GM12878 (cell line): ENCODE measurements at regions of chr11 and their contacts with region 1.

Region 1: GRCh38 chr11:34208266-34209135 is 103.1 kb downstream of the NAT10 start:
- DNase-seq: no peak
- ATAC-seq: 0 out of 3 replicates have a peak, but pooled peaks have one; percentile 23
- H3K4me3 ChIP-seq: no peak overlapping the region
- H3K27ac ChIP-seq: no peak overlapping the region
- H3K4me1 ChIP-seq: peaks cover 7% of the 10 kb centered on the region
- H3K27me3 ChIP-seq: no peaks in the 10 kb centered on the region
- CTCF ChIP-seq: no peak
- EP300 ChIP-seq: no peak
- POLR2A ChIP-seq: no peak
- RAD21 ChIP-seq: no peak

Region 2: GRCh38 chr11:34161812-34162499 is 46.5 kb before region 1 on chr11:
- CTCF ChIA-PET with region 1: no interaction called
- POLR2A ChIA-PET with region 1: no interaction called
- RAD21 ChIA-PET with region 1: no interaction called
- SMC1A ChIA-PET with region 1: no interaction called
- in situ Hi-C with region 1: no loop called
- intact Hi-C with region 1: no loop called
- DNase-seq: no peak
- ATAC-seq: peak; percentile 77
- H3K4me3 ChIP-seq: no peak overlapping the region
- H3K27ac ChIP-seq: no peak overlapping the region
- H3K4me1 ChIP-seq: no peaks in the 10 kb centered on the region
- H3K27me3 ChIP-seq: no peaks in the 10 kb centered on the region
- CTCF ChIP-seq: no peak
- EP300 ChIP-seq: peak in 1 of 2 experiments; percentile 56; a peak in 2 of 4 replicates
- POLR2A ChIP-seq: no peak
- RAD21 ChIP-seq: no peak

Region 3: GRCh38 chr11:34180040-34180813 is 28.3 kb before region 1 on chr11:
- CTCF ChIA-PET with region 1: interaction called, 14 read pairs
- POLR2A ChIA-PET with region 1: interaction called, 4 read pairs
- RAD21 ChIA-PET with region 1: interaction called, 3 read pairs
- SMC1A ChIA-PET with region 1: interaction called, 7 read pairs
- in situ Hi-C with region 1: no loop called
- intact Hi-C with region 1: no loop called
- DNase-seq: peak; percentile 30
- ATAC-seq: peak; percentile 78
- H3K4me3 ChIP-seq: no peak overlapping the region
- H3K27ac ChIP-seq: 0 out of 2 replicates have a peak overlapping the region, but pooled peaks have one; percentile 16
- H3K4me1 ChIP-seq: peaks cover 29% of the 10 kb centered on the region
- H3K27me3 ChIP-seq: no peaks in the 10 kb centered on the region
- CTCF ChIP-seq: no peak
- EP300 ChIP-seq: no peak
- POLR2A ChIP-seq: no peak
- RAD21 ChIP-seq: no peak

Region 4: DNA sequence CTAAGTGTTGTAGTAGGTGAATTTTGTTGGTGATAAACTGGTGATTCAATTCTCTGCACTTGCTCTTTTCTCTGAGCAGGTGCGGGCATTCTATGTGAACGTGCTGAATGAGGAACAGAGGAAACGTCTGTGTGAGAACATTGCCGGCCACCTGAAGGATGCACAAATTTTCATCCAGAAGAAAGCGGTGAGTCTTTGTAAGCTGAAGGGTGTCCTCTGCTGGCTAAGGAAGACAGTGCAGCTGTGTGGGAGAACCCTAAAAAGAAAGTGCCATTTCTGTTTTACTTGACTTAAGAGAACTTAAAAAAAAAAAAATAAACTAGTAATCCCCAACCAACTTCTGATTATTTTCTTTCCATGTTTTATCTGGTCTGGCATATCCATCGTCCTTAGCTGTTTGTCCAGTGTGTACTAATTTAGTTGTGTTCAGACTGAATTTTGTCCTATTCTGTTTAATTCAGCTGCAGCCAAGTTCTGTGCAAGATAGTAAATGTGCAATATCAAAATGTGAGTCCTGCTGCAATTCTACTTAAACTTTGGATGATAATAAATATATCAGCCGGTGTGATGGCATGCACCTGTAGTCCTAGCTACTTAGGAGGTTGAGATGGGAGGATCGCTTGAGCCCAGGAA is 259.8 kb after region 1 on chr11:
- CTCF ChIA-PET with region 1: no interaction called
- POLR2A ChIA-PET with region 1: no interaction called
- RAD21 ChIA-PET with region 1: no interaction called
- SMC1A ChIA-PET with region 1: no interaction called
- in situ Hi-C with region 1: no loop called
- intact Hi-C with region 1: no loop called
- DNase-seq: no peak
- ATAC-seq: peak; percentile 62
- H3K4me3 ChIP-seq: no peak overlapping the region
- H3K27ac ChIP-seq: no peak overlapping the region
- H3K4me1 ChIP-seq: no peaks in the 10 kb centered on the region
- H3K27me3 ChIP-seq: no peaks in the 10 kb centered on the region
- CTCF ChIP-seq: peak; percentile 55 to 73 (median 67)
- EP300 ChIP-seq: no peak
- POLR2A ChIP-seq: no peak
- RAD21 ChIP-seq: peak; percentile 67